Esophagus muscularis mucosa (tissue), 4 donors: ENCODE measurements at regions of chr22 and their contacts with region 1.

Region 1: DNA sequence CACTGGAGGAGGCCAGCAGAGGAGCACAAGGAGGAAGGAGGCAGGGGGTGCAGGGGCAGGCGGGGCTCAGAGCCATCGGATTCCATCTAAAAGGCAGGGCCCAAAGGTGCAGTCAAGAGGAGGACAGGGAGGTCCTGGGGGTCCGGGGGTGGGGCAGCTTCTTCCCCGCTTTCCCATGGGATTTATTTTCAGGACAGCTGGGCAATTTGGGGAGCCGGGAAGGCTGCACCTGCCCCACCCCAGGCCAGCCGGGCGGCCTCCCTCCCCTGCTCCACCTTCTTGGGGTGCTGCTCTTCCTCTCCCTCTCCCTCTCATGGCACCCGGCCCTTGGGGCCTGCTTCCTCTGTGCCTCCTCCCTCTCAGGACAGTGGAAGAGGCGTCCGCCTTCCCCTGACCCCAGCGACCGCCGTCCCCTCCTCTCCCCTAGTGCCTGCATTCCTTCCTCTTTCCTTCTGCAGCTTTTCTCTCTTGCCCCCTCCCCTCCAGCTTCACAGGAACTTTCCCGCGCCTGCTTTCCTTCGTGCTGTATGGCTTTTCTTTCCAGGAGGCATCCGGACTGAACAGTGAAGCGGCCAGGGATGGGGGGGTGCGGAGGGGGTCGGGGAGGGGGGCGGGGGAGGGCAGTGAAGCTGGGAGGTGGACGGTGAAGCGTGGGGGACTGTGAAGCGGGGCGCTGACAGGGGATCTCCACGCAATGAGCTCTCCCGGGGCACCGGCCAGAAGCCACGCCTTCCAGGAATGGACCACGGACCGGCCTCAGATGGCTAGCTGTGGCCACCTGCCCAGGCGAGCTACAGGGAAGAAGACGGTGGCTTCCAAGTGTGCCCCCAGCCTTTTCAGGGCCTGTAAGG is 26.9 kb downstream of the APOBEC3H start:
- DNase-seq: no peak
- H3K4me3 ChIP-seq: no peak overlapping the region
- H3K27ac ChIP-seq: no peak overlapping the region
- H3K4me1 ChIP-seq: peaks cover 0 to 10% (median 8%) of the 10 kb centered on the region in 4 donors
- H3K27me3 ChIP-seq: no peaks in the 10 kb centered on the region
- CTCF ChIP-seq: no peak
- EP300 ChIP-seq: no peak
- POLR2A ChIP-seq: no peak

Region 2: GRCh38 chr22:38777087-38777671 is 346.8 kb before region 1 on chr22:
- intact Hi-C with region 1: loop called (anchors 10 kb)
- DNase-seq: no peak
- H3K4me3 ChIP-seq: no peak overlapping the region
- H3K27ac ChIP-seq: no peak overlapping the region
- H3K4me1 ChIP-seq: peaks cover 0 to 4% (median 0%) of the 10 kb centered on the region in 4 donors
- H3K27me3 ChIP-seq: no peaks in the 10 kb centered on the region
- CTCF ChIP-seq: no peak
- EP300 ChIP-seq: no peak
- POLR2A ChIP-seq: no peak